ENCODE measurements at regions of chr18 and their contacts with region 1.

Region 1: DNA sequence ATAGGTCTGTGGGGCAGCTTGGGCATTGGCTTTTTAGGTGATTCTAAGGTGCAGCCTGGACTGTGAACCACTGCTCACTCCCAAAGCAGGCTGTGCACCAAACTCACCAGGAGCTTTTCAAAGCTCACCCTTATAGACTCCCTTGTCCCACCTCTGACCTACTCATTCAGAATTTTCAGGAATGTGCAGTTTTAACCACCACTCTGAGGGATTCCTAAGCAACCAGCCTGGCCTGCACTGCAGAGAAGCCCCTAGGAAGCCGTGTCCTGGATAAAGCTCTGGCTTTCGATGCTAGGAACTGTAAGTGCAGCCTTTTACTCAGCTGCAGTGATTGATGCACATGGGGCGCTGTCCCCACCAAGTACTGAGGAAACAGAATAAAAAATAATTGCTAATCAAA is 33.0 kb downstream of the MRO start:
- DNase-seq: no peak
- H3K4me3 ChIP-seq: no peak overlapping the region
- H3K27ac ChIP-seq: no peak overlapping the region
- H3K4me1 ChIP-seq: peaks cover 20% of the 10 kb centered on the region
- H3K27me3 ChIP-seq: peaks cover 6% of the 10 kb centered on the region
- CTCF ChIP-seq: no peak

Region 2: GRCh38 chr18:50507120-50507590 is 279.7 kb before region 1 on chr18:
- CTCF ChIA-PET with region 1: no interaction called
- POLR2A ChIA-PET with region 1: no interaction called
- intact Hi-C with region 1: loop called (anchors 2 kb)
- DNase-seq: peak; percentile 41
- H3K4me3 ChIP-seq: no peak overlapping the region
- H3K27ac ChIP-seq: no peak overlapping the region
- H3K4me1 ChIP-seq: no peaks in the 10 kb centered on the region
- H3K27me3 ChIP-seq: no peaks in the 10 kb centered on the region
- CTCF ChIP-seq: peak; percentile 63

Region 3: GRCh38 chr18:50573679-50574078 is 213.2 kb before region 1 on chr18:
- CTCF ChIA-PET with region 1: no interaction called
- POLR2A ChIA-PET with region 1: no interaction called
- intact Hi-C with region 1: loop called (anchors 10 kb)
- DNase-seq: no peak
- H3K4me3 ChIP-seq: no peak overlapping the region
- H3K27ac ChIP-seq: no peak overlapping the region
- H3K4me1 ChIP-seq: no peaks in the 10 kb centered on the region
- H3K27me3 ChIP-seq: peaks cover 50% of the 10 kb centered on the region
- CTCF ChIP-seq: peak; percentile 49

Region 4: DNA sequence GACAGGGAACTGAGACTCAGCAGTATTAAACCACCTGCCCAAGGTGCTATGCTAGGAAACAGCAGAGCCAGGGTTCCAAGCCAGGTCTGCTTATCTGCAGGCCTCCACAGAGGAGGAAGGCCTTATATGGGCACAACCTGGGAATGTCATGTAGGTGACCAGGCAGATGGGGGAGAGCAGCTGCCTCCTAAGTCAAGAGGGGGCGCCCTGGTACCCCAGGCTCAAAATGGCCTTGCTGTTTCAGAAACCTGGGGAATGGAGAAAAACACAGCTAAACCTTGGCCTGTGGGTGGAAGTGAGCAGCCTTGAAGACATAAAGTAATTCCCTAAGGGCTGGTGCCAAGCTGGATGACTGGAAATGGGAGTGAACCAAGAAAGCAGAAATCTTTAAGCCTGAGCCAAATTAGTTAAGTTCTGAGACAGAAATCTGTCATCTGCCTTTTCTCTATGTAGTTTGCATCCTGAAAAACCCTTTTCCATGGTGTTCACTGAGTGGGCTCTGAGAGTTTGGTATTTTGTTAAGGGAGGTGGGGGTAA is 147.9 kb before region 1 on chr18:
- CTCF ChIA-PET with region 1: no interaction called
- POLR2A ChIA-PET with region 1: no interaction called
- intact Hi-C with region 1: no loop called
- DNase-seq: no peak
- H3K4me3 ChIP-seq: no peak overlapping the region
- H3K27ac ChIP-seq: no peak overlapping the region
- H3K4me1 ChIP-seq: no peaks in the 10 kb centered on the region
- H3K27me3 ChIP-seq: no peaks in the 10 kb centered on the region
- CTCF ChIP-seq: no peak

Region 5: GRCh38 chr18:50659091-50660003 is 127.5 kb before region 1 on chr18:
- CTCF ChIA-PET with region 1: no interaction called
- POLR2A ChIA-PET with region 1: no interaction called
- intact Hi-C with region 1: loop called (anchors 10 kb)
- DNase-seq: peak; percentile 38
- H3K4me3 ChIP-seq: no peak overlapping the region
- H3K27ac ChIP-seq: no peak overlapping the region
- H3K4me1 ChIP-seq: no peaks in the 10 kb centered on the region
- H3K27me3 ChIP-seq: no peaks in the 10 kb centered on the region
- CTCF ChIP-seq: 0 out of 2 replicates have a peak, but pooled peaks have one; percentile 27

Region 6: DNA sequence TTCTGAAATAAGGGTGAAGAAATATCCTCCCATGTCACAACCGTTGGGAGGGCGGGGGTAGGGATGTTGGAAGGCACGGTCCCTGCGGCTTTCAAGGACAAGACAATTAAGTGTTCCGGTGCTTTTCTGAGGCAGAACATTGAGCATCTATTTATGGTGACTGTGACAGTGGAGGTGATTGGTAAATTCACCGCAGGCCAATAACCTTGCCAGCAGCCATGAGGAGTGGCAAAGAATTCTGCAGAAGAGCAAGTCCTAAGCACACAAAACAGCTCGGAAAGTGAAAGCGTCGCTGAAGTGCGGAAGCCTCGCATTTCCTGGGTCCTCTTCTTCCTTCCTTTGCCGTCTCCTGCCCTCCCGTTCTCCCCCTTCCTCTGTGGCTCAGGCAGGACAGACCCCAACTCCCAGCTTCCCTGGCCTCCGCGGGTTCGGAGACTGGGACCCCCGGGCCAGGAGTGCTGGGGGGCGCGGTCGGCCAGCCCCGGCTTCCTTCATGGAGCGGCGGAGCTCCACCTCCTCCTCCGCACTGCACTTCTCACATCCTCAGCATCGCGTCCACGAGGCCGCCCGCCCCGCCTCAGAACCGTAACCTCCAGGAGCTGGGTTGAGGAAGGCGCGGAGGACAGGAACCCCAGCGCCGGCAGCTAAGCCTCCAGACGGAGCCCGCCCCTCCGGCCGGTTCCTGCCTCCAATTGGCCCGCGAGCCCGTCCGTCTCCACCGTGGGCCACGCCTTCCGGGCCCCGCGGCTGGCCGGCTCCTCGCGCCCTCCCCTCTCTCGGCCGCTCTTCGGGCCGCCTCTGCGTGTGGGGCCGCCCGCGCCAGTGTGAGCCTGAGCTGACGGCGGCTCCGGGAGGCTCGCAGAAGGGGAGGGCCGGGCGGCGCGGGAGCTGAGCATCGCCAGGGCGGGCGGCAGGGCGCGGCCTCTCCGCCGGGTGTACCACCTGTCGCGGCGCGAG is 91.8 kb after region 1 on chr18 and contains the start of gene ME2:
- CTCF ChIA-PET with region 1: no interaction called
- POLR2A ChIA-PET with region 1: no interaction called
- intact Hi-C with region 1: no loop called
- DNase-seq: peak; percentile 94
- H3K4me3 ChIP-seq: peak within 1 kb of the TSS; percentile 79
- H3K27ac ChIP-seq: peak within 1 kb of the TSS; percentile 83
- H3K4me1 ChIP-seq: peaks cover 7% of the 10 kb centered on the region
- H3K27me3 ChIP-seq: no peaks in the 10 kb centered on the region
- CTCF ChIP-seq: no peak
- total RNA-seq, gene ME2: 55.3 and 60.0 TPM in 2 replicates

Measured in A673 (cell line).